Colonic mucosa (tissue), 4 donors: ENCODE measurements at regions of chr17 and their contacts with region 1.

Region 1: DNA sequence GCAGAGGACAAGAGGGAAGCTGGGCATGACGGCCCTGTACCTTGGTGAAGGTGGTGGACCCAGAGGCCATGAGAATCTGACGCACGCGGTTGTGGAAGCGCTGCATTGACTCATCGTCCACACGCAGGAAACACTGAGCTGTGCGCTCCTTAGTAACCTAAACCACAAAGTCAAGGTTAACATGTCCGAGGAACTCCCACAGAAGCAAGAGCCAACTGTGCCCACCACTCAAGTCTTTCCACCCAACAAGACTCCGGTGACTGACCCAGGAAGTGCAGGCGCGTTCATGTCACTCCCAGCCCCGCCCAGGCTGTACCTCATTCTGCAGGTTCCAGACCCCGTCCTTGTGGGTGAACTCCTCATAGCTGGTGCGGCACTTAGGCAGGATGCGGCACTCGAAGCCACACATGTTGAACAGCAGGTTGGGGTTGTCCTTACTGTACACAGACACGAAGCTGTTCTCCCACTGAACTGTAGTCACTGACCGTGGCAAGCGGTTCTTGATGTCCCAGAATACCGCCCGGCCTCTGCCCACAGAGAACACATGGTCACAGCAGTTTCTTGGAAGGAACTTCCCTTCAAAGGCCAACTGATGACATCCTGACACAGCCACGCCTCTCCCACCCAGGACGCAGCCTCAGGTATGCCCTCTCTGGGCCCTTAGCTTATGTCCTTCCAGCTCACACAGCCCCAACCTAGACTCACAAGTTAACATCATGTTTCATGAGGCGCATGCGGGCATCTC is 11.5 kb downstream of the PRPF8 start:
- DNase-seq: no peak
- H3K4me3 ChIP-seq: no peak overlapping the region
- H3K27ac ChIP-seq: no peak overlapping the region
- H3K4me1 ChIP-seq: no peaks in the 10 kb centered on the region
- H3K27me3 ChIP-seq: no peaks in the 10 kb centered on the region
- CTCF ChIP-seq: no peak

Region 2: DNA sequence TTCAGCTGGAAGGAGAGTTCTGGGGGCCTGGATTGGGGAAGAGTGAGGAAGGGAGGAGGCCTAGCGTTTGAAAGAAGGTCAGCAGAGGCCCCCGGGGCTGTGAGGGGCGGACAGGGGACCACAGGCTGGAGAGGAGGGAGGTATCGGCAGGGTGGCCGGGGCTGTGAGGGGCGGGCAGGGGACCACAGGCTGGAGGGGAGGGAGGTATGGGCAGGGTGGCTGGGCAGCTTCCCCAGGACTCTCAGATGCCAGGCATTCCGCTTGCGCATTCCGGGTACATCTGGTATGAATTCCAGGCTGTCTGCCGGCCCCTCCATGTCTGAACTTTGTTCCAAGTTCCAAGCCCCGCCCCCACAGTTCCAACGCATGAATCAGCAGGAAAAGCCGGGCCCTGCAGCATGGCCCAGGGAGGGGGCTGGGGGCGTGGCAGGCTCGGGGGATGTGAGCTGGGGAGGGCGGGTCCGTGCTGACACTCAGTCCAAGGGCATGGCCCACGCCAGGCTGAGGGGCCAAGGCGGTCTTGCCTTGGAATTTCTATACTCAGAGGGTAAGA is 41.3 kb after region 1 on chr17:
- intact Hi-C with region 1: loop called (anchors 5 kb)
- DNase-seq: peak; percentile 100
- H3K4me3 ChIP-seq: peak overlapping the region; percentile 93
- H3K27ac ChIP-seq: peak overlapping the region; percentile 98
- H3K4me1 ChIP-seq: peaks cover 25% of the 10 kb centered on the region
- H3K27me3 ChIP-seq: no peaks in the 10 kb centered on the region
- CTCF ChIP-seq: no peak

Region 3: DNA sequence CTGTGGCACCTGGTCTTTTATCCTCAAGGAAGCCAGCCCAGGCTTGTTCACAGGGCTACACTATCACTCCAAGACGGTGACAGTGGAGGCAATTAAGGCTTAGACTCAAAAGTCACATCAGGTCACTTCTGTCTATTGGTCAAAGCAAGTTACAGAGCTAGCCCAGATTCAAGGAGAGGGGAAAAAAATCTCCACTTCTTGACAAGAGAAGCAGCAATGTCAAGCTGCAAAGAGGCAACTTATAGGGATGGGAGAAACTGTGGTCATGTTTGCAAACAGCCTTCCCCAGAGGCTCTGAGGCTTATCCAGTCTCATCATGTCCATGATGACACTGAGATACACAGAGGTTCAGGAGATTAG is 120.2 kb after region 1 on chr17:
- intact Hi-C with region 1: no loop called
- DNase-seq: no peak
- H3K4me3 ChIP-seq: no peak overlapping the region
- H3K27ac ChIP-seq: no peak overlapping the region
- H3K4me1 ChIP-seq: no peaks in the 10 kb centered on the region
- H3K27me3 ChIP-seq: no peaks in the 10 kb centered on the region
- CTCF ChIP-seq: no peak

Region 4: DNA sequence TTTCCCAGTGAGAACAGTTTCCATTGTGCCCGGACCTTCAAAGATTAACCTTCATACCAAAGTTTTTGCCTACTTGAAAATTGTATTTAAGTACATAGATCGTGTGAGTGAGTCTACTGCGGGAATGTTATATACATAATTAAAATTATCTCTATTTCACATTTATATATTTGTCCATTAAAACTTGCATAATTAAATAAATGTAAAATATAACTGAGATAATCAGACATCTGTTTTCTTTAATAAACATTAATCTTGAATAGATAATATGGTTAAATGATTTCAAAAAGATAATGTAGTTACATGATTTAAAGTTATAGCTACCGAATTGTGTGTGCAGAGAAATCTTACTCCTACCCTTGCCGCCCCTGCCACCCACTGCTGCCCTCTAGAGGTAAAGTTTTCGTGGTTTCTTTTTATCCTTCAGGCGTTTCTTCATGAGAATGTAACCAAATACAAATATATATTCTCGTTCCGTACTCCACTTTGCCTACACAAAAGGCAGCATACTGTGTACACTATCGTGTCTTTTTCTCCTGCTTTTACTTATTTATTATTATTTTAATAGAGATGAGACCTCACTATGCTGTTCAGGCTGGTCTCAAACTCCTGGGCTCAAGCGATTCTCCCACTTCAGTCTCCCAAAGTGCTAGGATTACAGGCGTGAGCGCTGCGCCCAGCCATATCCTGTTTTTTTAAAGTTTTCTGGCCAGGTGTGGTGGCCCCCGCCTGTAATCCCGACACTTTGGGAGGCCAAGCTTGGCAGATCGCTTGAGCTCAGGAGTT is 192.2 kb after region 1 on chr17:
- intact Hi-C with region 1: loop called (anchors 10 kb)
- DNase-seq: peak; percentile 63
- H3K4me3 ChIP-seq: no peak overlapping the region
- H3K27ac ChIP-seq: no peak overlapping the region
- H3K4me1 ChIP-seq: no peaks in the 10 kb centered on the region
- H3K27me3 ChIP-seq: no peaks in the 10 kb centered on the region
- CTCF ChIP-seq: peak; percentile 64

Region 5: DNA sequence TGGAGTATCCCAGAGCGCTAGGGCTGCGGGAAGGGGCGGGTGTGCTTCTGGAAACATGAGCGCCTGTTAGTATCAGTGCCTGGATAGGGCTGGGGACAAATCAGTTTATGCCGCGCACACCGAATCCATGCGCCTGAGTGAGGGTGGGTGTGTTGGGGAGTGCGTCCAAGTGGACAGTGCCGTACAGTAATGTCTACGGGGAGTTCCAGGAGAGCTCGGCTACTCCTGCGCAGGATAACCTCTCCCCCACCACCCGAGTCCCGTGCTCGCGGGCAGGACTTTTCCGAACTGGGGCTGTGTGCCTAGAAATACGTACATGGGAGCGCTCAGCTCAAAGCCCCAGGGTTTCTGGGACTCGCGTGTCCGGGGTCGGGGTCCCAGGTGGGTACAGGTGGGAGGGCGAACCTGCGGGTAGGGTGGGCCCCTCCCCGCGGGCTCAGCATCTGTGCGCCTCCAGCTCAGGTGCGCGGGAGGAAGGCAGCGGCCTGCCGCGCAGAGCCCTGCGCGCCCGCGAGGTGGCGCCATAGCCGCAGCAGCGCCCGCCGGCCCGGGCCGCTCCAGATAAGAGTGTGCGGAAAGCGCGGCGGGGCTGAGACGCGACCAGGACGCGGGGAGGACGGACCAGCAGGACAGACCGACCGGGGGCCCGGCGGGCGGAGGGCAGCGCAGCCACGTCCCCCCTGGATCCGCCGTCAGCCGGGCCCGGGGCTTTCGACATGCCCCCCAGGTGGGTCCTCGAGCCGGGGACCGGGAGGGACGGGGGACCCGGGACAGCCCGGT is 381.5 kb after region 1 on chr17 and contains the start of gene HIC1:
- intact Hi-C with region 1: no loop called
- DNase-seq: peak; percentile 71
- H3K4me3 ChIP-seq: peak within 1 kb of the TSS; percentile 59
- H3K27ac ChIP-seq: peak within 1 kb of the TSS; percentile 79
- H3K4me1 ChIP-seq: peaks cover 16% of the 10 kb centered on the region
- H3K27me3 ChIP-seq: peaks cover 54% of the 10 kb centered on the region
- CTCF ChIP-seq: peak; percentile 97
- total RNA-seq, gene HIC1: 7.0 to 11.2 TPM